ENCODE measurements at regions of chr5 and their contacts with region 1.

Region 1: DNA sequence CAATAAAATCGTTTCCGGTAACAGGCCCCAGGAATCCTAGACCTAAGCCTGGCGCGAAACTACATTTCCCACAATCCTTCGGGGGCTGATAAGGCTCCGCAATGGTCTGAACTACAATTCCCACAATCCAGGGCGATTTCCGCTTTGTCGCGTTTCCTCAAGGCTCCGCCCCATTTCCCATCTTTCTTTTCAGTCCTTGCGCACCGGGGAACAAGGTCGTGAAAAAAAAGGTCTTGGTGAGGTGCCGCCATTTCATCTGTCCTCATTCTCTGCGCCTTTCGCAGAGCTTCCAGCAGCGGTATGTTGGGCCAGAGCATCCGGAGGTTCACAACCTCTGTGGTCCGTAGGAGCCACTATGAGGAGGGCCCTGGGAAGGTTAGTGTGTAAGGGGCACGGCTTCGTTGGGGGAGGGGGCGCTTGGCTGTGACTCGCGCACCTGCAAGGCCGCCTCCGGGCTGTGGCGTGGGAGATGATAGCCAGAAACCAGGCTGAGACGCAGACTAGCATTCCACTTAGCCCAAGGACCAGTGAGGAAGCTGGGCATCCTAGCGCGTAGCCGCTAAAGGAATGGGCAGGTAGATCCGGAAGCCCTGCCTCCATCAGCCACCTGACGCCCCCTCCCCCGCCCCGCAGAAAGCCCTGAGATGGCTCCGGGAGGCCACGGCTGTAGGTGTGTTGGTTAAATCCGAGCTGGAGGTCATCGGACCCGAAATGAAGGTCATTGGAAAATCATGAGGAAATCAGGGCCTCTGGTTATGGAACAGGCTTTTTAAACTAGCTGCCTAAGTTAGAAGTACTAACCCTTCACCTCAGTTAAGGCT is at the start of gene COX7C:
- DNase-seq: peak; percentile 96
- H3K4me3 ChIP-seq: peak within 1 kb of the TSS; percentile 74 to 98 (median 88)
- H3K27ac ChIP-seq: peak within 1 kb of the TSS; percentile 91 to 95 (median 94)
- H3K4me1 ChIP-seq: peaks cover 0 to 13% (median 7%) of the 10 kb centered on the region in 4 donors
- H3K27me3 ChIP-seq: no peaks in the 10 kb centered on the region
- CTCF ChIP-seq: no peak
- EP300 ChIP-seq: peak in 2 of 4 donors; percentile 1 to 37
- POLR2A ChIP-seq: peak; percentile 88 to 90
- total RNA-seq, gene COX7C: 570 to 1,155 (median 855) TPM

Region 2: GRCh38 chr5:86143837-86144236 is 474.1 kb before region 1 on chr5:
- intact Hi-C with region 1: loop called (anchors 10 kb)
- DNase-seq: peak; percentile 84
- H3K4me3 ChIP-seq: no peak overlapping the region
- H3K27ac ChIP-seq: peak overlapping the region; percentile 51 to 73 (median 56)
- H3K4me1 ChIP-seq: peaks cover 0 to 17% (median 9%) of the 10 kb centered on the region in 4 donors
- H3K27me3 ChIP-seq: no peaks in the 10 kb centered on the region
- CTCF ChIP-seq: no peak
- EP300 ChIP-seq: peak; percentile 28 to 75 (median 59)
- POLR2A ChIP-seq: no peak

Region 3: GRCh38 chr5:86337667-86338460 is 280.1 kb before region 1 on chr5:
- intact Hi-C with region 1: no loop called
- DNase-seq: no peak
- H3K4me3 ChIP-seq: no peak overlapping the region
- H3K27ac ChIP-seq: no peak overlapping the region
- H3K4me1 ChIP-seq: peaks cover 0 to 9% (median 0%) of the 10 kb centered on the region in 4 donors
- H3K27me3 ChIP-seq: no peaks in the 10 kb centered on the region
- CTCF ChIP-seq: no peak
- EP300 ChIP-seq: no peak
- POLR2A ChIP-seq: no peak